Heart left ventricle (tissue), 16 donors: ENCODE measurements at regions of chr10 and their contacts with region 1.

Region 1: GRCh38 chr10:42782446-42783180 is at the start of gene BMS1:
- DNase-seq: peak; percentile 89 to 92 (median 91)
- ATAC-seq: peak; percentile 97
- H3K4me3 ChIP-seq: peak within 1 kb of the TSS; percentile 58 to 92 (median 78)
- H3K27ac ChIP-seq: peak within 1 kb of the TSS; percentile 85 to 97 (median 94)
- H3K4me1 ChIP-seq: peaks cover 0 to 20% (median 10%) of the 10 kb centered on the region in 12 donors
- H3K27me3 ChIP-seq: peaks cover 0 to 2% (median 0%) of the 10 kb centered on the region in 9 donors
- CTCF ChIP-seq: peak in 1 of 12 donors; percentile 15
- POLR2A ChIP-seq: peak in 1 of 2 donors; percentile 70
- total RNA-seq, gene BMS1: 11.7 to 16.1 (median 13.8) TPM

Region 2: GRCh38 chr10:42552493-42553407 is 229.9 kb before region 1 on chr10:
- intact Hi-C with region 1: loop called in 2 of 10 experiments (anchors 2 to 10 kb)
- DNase-seq: peak; percentile 95 to 98 (median 97)
- ATAC-seq: peak; percentile 98 to 100 (median 99)
- H3K4me3 ChIP-seq: peak overlapping the region; percentile 40 to 89 (median 68)
- H3K27ac ChIP-seq: peak overlapping the region in 11 of 12 donors; percentile 23 to 78 (median 63)
- H3K4me1 ChIP-seq: peaks cover 0 to 21% (median 12%) of the 10 kb centered on the region in 12 donors
- H3K27me3 ChIP-seq: no peaks in the 10 kb centered on the region
- CTCF ChIP-seq: no peak
- POLR2A ChIP-seq: peak in 1 of 2 donors; percentile 82

Region 3: GRCh38 chr10:42638055-42638820 is 144.4 kb before region 1 on chr10 and contains the start of gene ZNF33B:
- intact Hi-C with region 1: loop called in 3 of 10 experiments (anchors 5 to 10 kb)
- DNase-seq: peak; percentile 92 to 97 (median 96)
- ATAC-seq: peak; percentile 99
- H3K4me3 ChIP-seq: peak within 1 kb of the TSS; percentile 63 to 98 (median 85)
- H3K27ac ChIP-seq: peak within 1 kb of the TSS; percentile 76 to 98 (median 92)
- H3K4me1 ChIP-seq: peaks cover 0 to 11% (median 6%) of the 10 kb centered on the region in 12 donors
- H3K27me3 ChIP-seq: no peaks in the 10 kb centered on the region
- CTCF ChIP-seq: peak in 1 of 12 donors; percentile 6
- POLR2A ChIP-seq: peak in 1 of 2 donors; percentile 67
- total RNA-seq, gene ZNF33B: 7.7 to 20.5 (median 10.4) TPM

Region 4: DNA sequence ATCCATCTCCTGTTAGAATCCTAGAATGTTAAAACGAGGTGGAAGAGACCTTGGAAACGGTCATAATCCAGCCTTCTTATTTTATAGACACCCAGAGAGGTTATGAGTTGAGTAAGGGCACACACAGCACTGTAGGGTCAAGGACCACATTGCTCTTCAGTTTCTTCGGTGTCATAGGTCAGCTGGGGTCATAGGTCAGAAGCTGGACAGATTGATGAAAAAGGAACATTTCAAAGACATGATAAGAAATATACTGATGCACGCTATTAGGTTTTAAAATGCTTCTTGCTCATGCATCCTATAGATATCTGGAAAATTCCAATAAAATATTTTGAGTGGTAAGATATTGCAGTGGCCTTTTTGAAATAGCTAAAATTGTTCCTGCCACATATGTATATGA is 60.0 kb before region 1 on chr10:
- intact Hi-C with region 1: no loop called
- DNase-seq: no peak
- ATAC-seq: no peak
- H3K4me3 ChIP-seq: no peak overlapping the region
- H3K27ac ChIP-seq: no peak overlapping the region
- H3K4me1 ChIP-seq: no peaks in the 10 kb centered on the region
- H3K27me3 ChIP-seq: peaks cover 0 to 18% (median 0%) of the 10 kb centered on the region in 9 donors
- CTCF ChIP-seq: no peak
- POLR2A ChIP-seq: no peak

Region 5: GRCh38 chr10:42753126-42753506 is 29.5 kb before region 1 on chr10:
- intact Hi-C with region 1: loop called in 3 of 10 experiments (anchors 1 to 2 kb)
- DNase-seq: peak; percentile 74 to 87 (median 80)
- ATAC-seq: peak; percentile 87 to 93 (median 92)
- H3K4me3 ChIP-seq: peak overlapping the region; percentile 29 to 66 (median 54)
- H3K27ac ChIP-seq: no peak overlapping the region
- H3K4me1 ChIP-seq: peaks cover 0 to 36% (median 16%) of the 10 kb centered on the region in 12 donors
- H3K27me3 ChIP-seq: peaks cover 10 to 77% (median 38%) of the 10 kb centered on the region in 9 donors
- CTCF ChIP-seq: peak; percentile 81 to 97 (median 85)
- POLR2A ChIP-seq: no peak

Region 6: GRCh38 chr10:43444313-43444712 is 661.7 kb after region 1 on chr10:
- intact Hi-C with region 1: loop called in 1 of 10 experiments (anchors 10 kb)
- DNase-seq: no peak
- ATAC-seq: no peak
- H3K4me3 ChIP-seq: no peak overlapping the region
- H3K27ac ChIP-seq: no peak overlapping the region
- H3K4me1 ChIP-seq: peaks cover 0 to 8% (median 0%) of the 10 kb centered on the region in 12 donors
- H3K27me3 ChIP-seq: no peaks in the 10 kb centered on the region
- CTCF ChIP-seq: no peak
- POLR2A ChIP-seq: no peak

Region 7: GRCh38 chr10:44125879-44126278 is 1343.3 kb after region 1 on chr10:
- intact Hi-C with region 1: no loop called
- DNase-seq: no peak
- ATAC-seq: peak in 2 of 4 donors; percentile 51 to 60
- H3K4me3 ChIP-seq: no peak overlapping the region
- H3K27ac ChIP-seq: no peak overlapping the region
- H3K4me1 ChIP-seq: peaks cover 0 to 2% (median 0%) of the 10 kb centered on the region in 12 donors
- H3K27me3 ChIP-seq: no peaks in the 10 kb centered on the region
- CTCF ChIP-seq: no peak
- POLR2A ChIP-seq: no peak